Posterior vena cava (tissue), 2 donors: ENCODE measurements at regions of chr10 and their contacts with region 1.

Region 1: GRCh38 chr10:96890172-96890513 is 58.0 kb downstream of the LCOR start:
- DNase-seq: no peak

Region 2: GRCh38 chr10:96690755-96691731 is 199.1 kb before region 1 on chr10:
- intact Hi-C with region 1: no loop called
- DNase-seq: no peak

Region 3: GRCh38 chr10:96831867-96832720 is 58.0 kb before region 1 on chr10 and contains the start of gene LCOR:
- intact Hi-C with region 1: loop called in 1 of 2 experiments (anchors 10 kb)
- DNase-seq: peak; percentile 95
- total RNA-seq, gene LCOR: 20.9 to 36.0 TPM